Activated T-helper 1 cell treated with anti-CD3 and anti-CD28 coated beads, Interleukin-12 subunit alpha, Interleukin-12 subunit beta, Interleukin-2, Interleukin-4 antibody, amounts not matched to agents 30 ng/mL and 10 ng/mL and 1 ng/mL, durations not matched to agents 14 hours and 24 hours and 36 hours (primary cell): ENCODE measurements at regions of chr20 and their contacts with region 1.

Region 1: DNA sequence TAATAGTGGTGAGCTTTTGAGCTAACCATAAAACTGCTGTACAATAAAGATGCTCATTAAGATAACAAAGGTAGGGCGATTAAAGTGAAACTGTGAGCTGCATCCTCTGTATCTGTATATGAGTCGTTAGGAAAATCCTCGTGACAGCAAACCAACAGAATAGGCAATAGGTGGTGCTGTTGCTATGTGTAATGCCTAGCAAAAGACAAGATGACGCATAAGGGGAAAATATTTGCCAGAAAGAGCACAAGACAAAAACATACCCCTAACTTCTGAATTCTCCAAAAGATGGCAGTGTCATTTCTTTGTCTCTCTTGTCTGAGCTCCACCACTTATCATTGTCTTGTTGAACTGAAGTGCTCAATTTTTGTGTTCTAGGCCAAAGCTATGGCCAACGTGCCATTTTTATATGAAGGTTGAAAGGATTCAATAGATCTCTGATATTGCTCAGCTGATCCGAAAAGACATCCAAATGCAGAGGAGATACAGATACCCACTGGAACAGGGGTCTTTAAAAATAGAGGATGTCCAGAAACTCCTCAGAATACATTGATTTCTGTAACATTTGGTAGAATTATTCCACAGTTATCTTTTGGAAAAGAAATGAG is 56.3 kb upstream of the ANKEF1 start:
- DNase-seq: peak; percentile 26
- H3K4me3 Mint-ChIP-seq: no peak overlapping the region
- H3K27ac Mint-ChIP-seq: no peak overlapping the region
- H3K4me1 Mint-ChIP-seq: peaks cover 7% of the 10 kb centered on the region
- H3K27me3 Mint-ChIP-seq: peaks cover 7% of the 10 kb centered on the region

Region 2: GRCh38 chr20:9903048-9903655 is 75.3 kb before region 1 on chr20:
- intact Hi-C with region 1: no loop called
- DNase-seq: no peak
- H3K4me3 Mint-ChIP-seq: no peak overlapping the region
- H3K27ac Mint-ChIP-seq: no peak overlapping the region
- H3K4me1 Mint-ChIP-seq: no peaks in the 10 kb centered on the region
- H3K27me3 Mint-ChIP-seq: peaks cover 2% of the 10 kb centered on the region

Region 3: GRCh38 chr20:10090588-10091166 is 112.2 kb after region 1 on chr20:
- intact Hi-C with region 1: loop called (anchors 1 kb)
- DNase-seq: no peak
- H3K4me3 Mint-ChIP-seq: no peak overlapping the region
- H3K27ac Mint-ChIP-seq: no peak overlapping the region
- H3K4me1 Mint-ChIP-seq: no peaks in the 10 kb centered on the region
- H3K27me3 Mint-ChIP-seq: peaks cover 3% of the 10 kb centered on the region

Region 4: DNA sequence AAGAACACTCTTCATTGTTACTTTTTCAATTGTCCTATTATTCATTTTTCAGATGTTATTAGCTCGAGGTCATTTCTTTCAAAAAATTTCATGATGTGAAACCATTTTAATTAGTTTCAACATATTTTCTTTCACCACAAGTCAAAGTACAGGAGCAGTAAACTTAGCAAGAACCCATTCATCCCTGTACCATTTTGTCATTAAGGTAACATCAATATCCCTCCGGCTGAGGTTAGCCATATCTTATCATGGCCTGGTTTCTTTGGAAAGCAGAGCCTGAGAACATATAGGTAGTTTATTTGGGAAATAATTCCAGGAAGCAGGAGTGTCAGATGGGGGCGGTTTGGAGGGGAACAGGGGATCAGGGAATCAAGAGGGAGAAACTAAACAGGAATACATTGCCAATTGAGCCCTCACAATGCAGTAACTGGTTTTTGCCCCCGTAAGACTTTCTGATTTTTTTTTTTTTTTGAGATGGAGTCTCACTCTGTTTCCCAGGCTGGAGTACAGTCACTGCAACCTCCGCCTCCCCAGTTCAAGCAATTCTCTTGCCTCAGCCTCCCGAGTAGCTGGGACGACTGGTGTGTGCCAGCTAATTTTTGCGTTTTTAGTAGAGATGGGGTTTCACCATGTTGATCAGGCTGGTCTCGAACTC is 371.8 kb after region 1 on chr20:
- intact Hi-C with region 1: loop called (anchors 2 kb)
- DNase-seq: no peak
- H3K4me3 Mint-ChIP-seq: peak overlapping the region; percentile 9
- H3K27ac Mint-ChIP-seq: peak overlapping the region; percentile 75
- H3K4me1 Mint-ChIP-seq: peaks cover 24% of the 10 kb centered on the region
- H3K27me3 Mint-ChIP-seq: no peaks in the 10 kb centered on the region

Region 5: GRCh38 chr20:10427060-10427692 is 448.7 kb after region 1 on chr20:
- intact Hi-C with region 1: loop called (anchors 1 kb)
- DNase-seq: no peak
- H3K4me3 Mint-ChIP-seq: no peak overlapping the region
- H3K27ac Mint-ChIP-seq: no peak overlapping the region
- H3K4me1 Mint-ChIP-seq: peaks cover 10% of the 10 kb centered on the region
- H3K27me3 Mint-ChIP-seq: no peaks in the 10 kb centered on the region

Region 6: DNA sequence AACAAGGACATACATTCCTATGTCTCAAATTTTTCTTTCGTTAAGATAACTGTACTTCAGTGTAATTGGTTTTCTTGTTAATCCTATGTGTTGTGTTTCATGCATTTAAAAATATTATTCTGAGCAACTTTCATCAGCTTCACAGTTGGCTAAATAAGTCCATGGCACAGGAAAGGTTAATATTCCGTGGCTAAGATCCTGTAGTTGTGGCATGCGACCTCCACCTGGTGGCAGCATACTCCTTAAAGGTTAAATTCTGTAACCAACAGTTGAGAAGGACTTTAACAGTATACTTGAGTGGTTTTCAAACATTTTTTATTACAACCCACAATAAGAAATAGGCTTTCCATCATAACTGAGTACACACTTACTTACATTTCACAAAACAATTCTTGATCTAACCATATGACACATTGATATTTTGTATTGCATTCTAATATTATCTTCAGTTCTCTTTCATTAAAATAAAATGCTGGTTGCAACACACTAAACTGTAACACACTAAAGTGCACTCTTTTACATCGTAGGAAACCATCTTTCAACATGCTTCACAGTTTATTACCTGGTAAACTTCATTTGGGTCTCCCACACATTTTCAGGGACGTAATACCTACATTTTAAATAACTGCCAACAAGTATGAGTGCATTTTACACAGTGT is 575.0 kb after region 1 on chr20:
- intact Hi-C with region 1: loop called (anchors 5 kb)
- DNase-seq: peak; percentile 19
- H3K4me3 Mint-ChIP-seq: no peak overlapping the region
- H3K27ac Mint-ChIP-seq: no peak overlapping the region
- H3K4me1 Mint-ChIP-seq: peaks cover 39% of the 10 kb centered on the region
- H3K27me3 Mint-ChIP-seq: no peaks in the 10 kb centered on the region

Region 7: GRCh38 chr20:10842116-10842515 is 863.6 kb after region 1 on chr20:
- intact Hi-C with region 1: no loop called
- DNase-seq: no peak
- H3K4me3 Mint-ChIP-seq: no peak overlapping the region
- H3K27ac Mint-ChIP-seq: no peak overlapping the region
- H3K4me1 Mint-ChIP-seq: no peaks in the 10 kb centered on the region
- H3K27me3 Mint-ChIP-seq: no peaks in the 10 kb centered on the region

Region 8: GRCh38 chr20:11012975-11013374 is 1034.5 kb after region 1 on chr20:
- intact Hi-C with region 1: no loop called
- DNase-seq: no peak
- H3K4me3 Mint-ChIP-seq: no peak overlapping the region
- H3K27ac Mint-ChIP-seq: no peak overlapping the region
- H3K4me1 Mint-ChIP-seq: no peaks in the 10 kb centered on the region
- H3K27me3 Mint-ChIP-seq: no peaks in the 10 kb centered on the region

Region 9: GRCh38 chr20:11204926-11205768 is 1226.6 kb after region 1 on chr20:
- intact Hi-C with region 1: loop called (anchors 5 kb)
- DNase-seq: no peak
- H3K4me3 Mint-ChIP-seq: no peak overlapping the region
- H3K27ac Mint-ChIP-seq: no peak overlapping the region
- H3K4me1 Mint-ChIP-seq: no peaks in the 10 kb centered on the region
- H3K27me3 Mint-ChIP-seq: no peaks in the 10 kb centered on the region